ENCODE measurements at regions of chr18 and their contacts with region 1.

Region 1: GRCh38 chr18:25351777-25352628 is at the start of gene ZNF521:
- DNase-seq: no peak
- H3K4me3 ChIP-seq: peak within 1 kb of the TSS; percentile 87
- H3K27me3 ChIP-seq: 0 out of 2 replicates have a peak, but pooled peaks cover 2% of the 10 kb centered on the region
- CTCF ChIP-seq: peak; percentile 38
- polyA plus RNA-seq, gene ZNF521: 18.6 and 29.3 TPM in 2 replicates

Region 2: GRCh38 chr18:23990474-23991410 is 1361.3 kb before region 1 on chr18:
- CTCF ChIA-PET with region 1: no interaction called
- POLR2A ChIA-PET with region 1: interaction called, 41 read pairs
- DNase-seq: no peak
- H3K4me3 ChIP-seq: no peak overlapping the region
- H3K27me3 ChIP-seq: no peaks in the 10 kb centered on the region; the same call in 1 of the 2 replicates
- CTCF ChIP-seq: no peak

Region 3: GRCh38 chr18:24930971-24931370 is 421.0 kb before region 1 on chr18:
- CTCF ChIA-PET with region 1: no interaction called
- POLR2A ChIA-PET with region 1: no interaction called
- DNase-seq: no peak
- H3K4me3 ChIP-seq: no peak overlapping the region
- H3K27me3 ChIP-seq: peaks cover 1% of the 10 kb centered on the region; the same call in 1 of the 2 replicates
- CTCF ChIP-seq: no peak

Region 4: DNA sequence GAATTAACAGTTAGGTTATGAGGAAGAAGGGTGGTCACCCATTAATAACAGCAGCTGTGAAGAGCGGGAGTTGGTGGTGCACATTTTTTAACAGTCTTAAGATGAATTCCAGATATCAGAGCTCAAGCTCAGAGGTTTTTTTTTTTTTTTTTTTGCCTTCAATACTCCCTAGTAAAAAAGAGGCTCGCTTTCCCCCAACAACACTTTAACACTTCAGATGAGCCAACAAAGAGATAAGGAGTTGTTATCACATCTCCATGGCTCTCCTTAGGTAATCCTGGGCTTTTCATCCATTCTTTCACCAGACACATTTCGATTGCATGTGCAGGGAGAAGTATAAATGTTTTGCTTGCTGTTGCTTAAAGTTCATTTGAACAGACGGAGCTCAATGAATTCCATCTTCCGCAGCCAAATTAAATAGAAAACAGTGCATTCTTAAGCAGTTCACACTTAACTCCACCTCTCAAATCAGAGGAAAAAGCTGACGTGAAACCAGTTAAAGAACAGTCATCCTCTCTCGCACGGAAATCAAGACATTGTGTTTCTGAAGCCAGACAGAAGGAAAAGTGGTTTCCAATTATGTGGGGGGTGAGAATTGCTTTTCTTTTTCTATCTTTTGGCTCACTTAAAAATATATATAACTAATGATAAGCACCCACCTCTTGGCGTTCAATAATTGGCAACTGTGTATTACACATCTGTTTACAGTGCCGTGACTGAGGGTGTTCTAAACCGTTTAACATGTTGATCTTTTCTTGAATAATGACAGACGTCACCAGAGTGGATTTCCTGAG is 118.3 kb before region 1 on chr18:
- CTCF ChIA-PET with region 1: interaction called, 3 read pairs
- POLR2A ChIA-PET with region 1: interaction called, 10 read pairs
- DNase-seq: peak; percentile 33
- H3K4me3 ChIP-seq: peak overlapping the region; percentile 12; the same call in 1 of the 2 replicates
- H3K27me3 ChIP-seq: no peaks in the 10 kb centered on the region
- CTCF ChIP-seq: no peak

Region 5: GRCh38 chr18:25326361-25326952 is 25.5 kb before region 1 on chr18:
- CTCF ChIA-PET with region 1: no interaction called
- POLR2A ChIA-PET with region 1: interaction called, 13 read pairs
- DNase-seq: peak; percentile 81
- H3K4me3 ChIP-seq: no peak overlapping the region
- H3K27me3 ChIP-seq: no peaks in the 10 kb centered on the region
- CTCF ChIP-seq: no peak

Measured in BJ (cell line).